Stomach (tissue), 19 donors: ENCODE measurements at regions of chr12 and their contacts with region 1.

Region 1: GRCh38 chr12:117367011-117367638 is 5.7 kb upstream of the NOS1 start:
- DNase-seq: peak; percentile 84 to 91
- H3K4me3 ChIP-seq: no peak overlapping the region
- H3K27ac ChIP-seq: no peak overlapping the region
- H3K4me1 ChIP-seq: no peaks in the 10 kb centered on the region
- H3K27me3 ChIP-seq: peaks cover 3 to 48% (median 29%) of the 10 kb centered on the region in 3 donors
- CTCF ChIP-seq: peak in 5 of 7 experiments; percentile 46 to 91 (median 84)
- EP300 ChIP-seq: no peak
- POLR2A ChIP-seq: no peak

Region 2: DNA sequence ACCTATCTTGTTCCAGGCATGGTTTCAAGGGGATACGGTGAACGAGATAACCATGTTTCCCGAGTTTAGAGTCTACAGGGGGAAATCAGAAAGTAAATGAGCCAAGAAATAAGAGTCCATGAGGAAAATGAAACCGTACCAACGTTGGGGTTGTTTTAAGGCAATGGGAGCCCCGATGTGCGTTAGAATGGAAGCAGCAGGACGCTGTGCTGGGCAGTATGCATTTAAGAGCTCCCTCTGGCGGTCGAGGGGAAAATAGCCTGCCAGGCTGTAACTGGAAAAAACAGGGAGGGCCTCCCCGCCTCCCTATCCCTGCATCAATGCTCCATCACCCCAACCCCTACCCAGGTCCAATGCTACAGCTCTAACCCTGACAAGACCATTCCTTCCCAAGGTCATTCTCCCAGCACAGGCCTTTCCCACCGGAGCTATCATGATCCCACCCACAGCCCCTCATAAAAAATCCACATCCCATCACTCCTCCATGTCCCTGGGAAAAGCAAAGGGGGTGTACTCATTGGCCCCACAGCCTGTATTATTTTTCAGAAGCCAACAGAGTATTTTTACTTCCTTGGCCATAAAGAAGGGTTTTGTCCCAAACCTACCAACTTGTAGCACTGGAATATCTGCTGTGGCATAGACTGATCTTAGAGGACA is 220.6 kb after region 1 on chr12:
- intact Hi-C with region 1: loop called (anchors 5 kb)
- DNase-seq: peak; percentile 63 to 66
- H3K4me3 ChIP-seq: no peak overlapping the region
- H3K27ac ChIP-seq: no peak overlapping the region
- H3K4me1 ChIP-seq: peaks cover 0 to 7% (median 3%) of the 10 kb centered on the region in 4 donors
- H3K27me3 ChIP-seq: peaks cover 0 to 28% (median 4%) of the 10 kb centered on the region in 3 donors
- CTCF ChIP-seq: peak in 5 of 7 experiments; percentile 61 to 86 (median 81)
- EP300 ChIP-seq: no peak
- POLR2A ChIP-seq: no peak